CD4-positive, alpha-beta memory T cell (primary cell): ENCODE measurements at regions of chr1 and their contacts with region 1.

Region 1: GRCh38 chr1:174999216-174999925 is 376 bp upstream of the CACYBP start:
- DNase-seq: peak; percentile 97 to 99 (median 99)
- H3K4me3 ChIP-seq: peak overlapping the region; percentile 42 to 63
- H3K4me3 Mint-ChIP-seq: no peak overlapping the region
- H3K27ac ChIP-seq: peak overlapping the region; percentile 99
- H3K27ac Mint-ChIP-seq: no peak overlapping the region
- H3K4me1 ChIP-seq: peaks cover 52% of the 10 kb centered on the region
- H3K4me1 Mint-ChIP-seq: peaks cover 24 to 43% (median 37%) of the 10 kb centered on the region in 4 donors
- H3K27me3 ChIP-seq: no peaks in the 10 kb centered on the region
- H3K27me3 Mint-ChIP-seq: no peaks in the 10 kb centered on the region

Region 2: GRCh38 chr1:173714759-173715537 is 1284.4 kb before region 1 on chr1 and contains the start of gene KLHL20:
- CTCF ChIA-PET with region 1: no interaction called
- POLR2A ChIA-PET with region 1: interaction called, 10 read pairs
- intact Hi-C with region 1: loop called (anchors 10 kb)
- DNase-seq: peak; percentile 89 to 93 (median 91)
- H3K4me3 ChIP-seq: peak within 1 kb of the TSS; percentile 47 to 73
- H3K4me3 Mint-ChIP-seq: peak within 1 kb of the TSS; percentile 95 to 100 (median 97)
- H3K27ac ChIP-seq: peak within 1 kb of the TSS; percentile 78
- H3K27ac Mint-ChIP-seq: peak within 1 kb of the TSS; percentile 92 to 98 (median 97)
- H3K4me1 ChIP-seq: peaks cover 34% of the 10 kb centered on the region
- H3K4me1 Mint-ChIP-seq: peaks cover 18 to 33% (median 25%) of the 10 kb centered on the region in 4 donors
- H3K27me3 ChIP-seq: peaks cover 5% of the 10 kb centered on the region
- H3K27me3 Mint-ChIP-seq: peaks cover 14 to 15% of the 10 kb centered on the region in 2 donors
- total RNA-seq, gene KLHL20: 41.0 to 43.9 TPM

Region 3: DNA sequence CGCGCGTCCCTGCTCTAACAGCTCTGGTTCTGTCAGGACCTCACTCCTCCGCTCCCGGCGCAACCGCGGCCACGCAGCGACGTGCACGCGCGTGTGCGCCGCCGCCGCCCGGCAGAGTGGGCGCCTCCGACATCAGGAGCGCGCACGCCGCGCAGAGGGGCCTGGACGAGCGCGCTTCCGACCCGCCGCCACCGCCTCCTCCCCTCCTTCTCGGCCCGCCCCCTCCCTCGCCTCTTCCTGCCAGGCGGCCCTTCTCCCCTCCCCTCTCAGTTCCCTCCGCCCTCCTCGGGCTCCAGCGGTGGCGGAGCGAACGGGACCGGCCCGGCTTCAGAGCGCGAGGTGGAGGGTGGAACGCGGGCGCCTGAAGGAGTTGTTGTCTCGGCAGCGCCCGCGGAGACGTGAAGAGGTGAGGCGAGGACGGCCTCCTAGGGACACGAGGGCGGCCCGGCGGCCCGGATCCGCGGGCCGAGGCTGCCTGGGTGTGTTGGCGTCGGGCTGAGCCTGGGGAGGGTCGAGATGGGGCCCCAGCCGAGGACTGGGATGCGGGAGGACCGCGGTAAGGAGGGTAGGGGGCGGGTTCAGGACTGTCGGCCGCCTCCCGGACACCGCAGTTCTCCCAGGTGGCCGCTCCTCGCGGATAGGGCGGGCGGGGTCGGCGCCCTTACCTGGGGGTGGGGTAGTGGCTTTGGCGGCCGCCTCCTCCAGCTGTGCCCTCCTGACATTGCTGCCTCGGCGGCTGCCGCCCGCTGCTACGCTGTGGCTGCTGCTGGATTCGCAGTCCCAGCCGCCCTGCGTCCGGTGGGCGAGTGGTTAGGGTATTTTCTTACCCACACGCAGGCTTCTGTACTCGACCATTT is 839.9 kb before region 1 on chr1 and contains the start of gene RABGAP1L:
- CTCF ChIA-PET with region 1: no interaction called
- POLR2A ChIA-PET with region 1: interaction called, 3 read pairs
- intact Hi-C with region 1: loop called (anchors 1 kb)
- DNase-seq: peak; percentile 91 to 96 (median 95)
- H3K4me3 ChIP-seq: peak within 1 kb of the TSS; percentile 88 to 95
- H3K4me3 Mint-ChIP-seq: peak within 1 kb of the TSS; percentile 94 to 99 (median 97)
- H3K27ac ChIP-seq: peak within 1 kb of the TSS; percentile 92
- H3K27ac Mint-ChIP-seq: peak within 1 kb of the TSS; percentile 92 to 99 (median 98)
- H3K4me1 ChIP-seq: peaks cover 56% of the 10 kb centered on the region
- H3K4me1 Mint-ChIP-seq: peaks cover 40 to 67% (median 52%) of the 10 kb centered on the region in 4 donors
- H3K27me3 ChIP-seq: no peaks in the 10 kb centered on the region
- H3K27me3 Mint-ChIP-seq: no peaks in the 10 kb centered on the region
- total RNA-seq, gene RABGAP1L: 113 to 114 TPM

Region 4: GRCh38 chr1:174800216-174800851 is 199.0 kb before region 1 on chr1:
- CTCF ChIA-PET with region 1: interaction called, 12 read pairs
- POLR2A ChIA-PET with region 1: interaction called, 112 read pairs
- intact Hi-C with region 1: loop called (anchors 1 kb)
- DNase-seq: peak in 1 of 5 donors; percentile 47
- H3K4me3 ChIP-seq: peak overlapping the region; percentile 54 to 73
- H3K4me3 Mint-ChIP-seq: no peak overlapping the region
- H3K27ac ChIP-seq: peak overlapping the region; percentile 62
- H3K27ac Mint-ChIP-seq: no peak overlapping the region
- H3K4me1 ChIP-seq: peaks cover 24% of the 10 kb centered on the region
- H3K4me1 Mint-ChIP-seq: peaks cover 0 to 11% (median 9%) of the 10 kb centered on the region in 4 donors
- H3K27me3 ChIP-seq: no peaks in the 10 kb centered on the region
- H3K27me3 Mint-ChIP-seq: no peaks in the 10 kb centered on the region

Region 5: DNA sequence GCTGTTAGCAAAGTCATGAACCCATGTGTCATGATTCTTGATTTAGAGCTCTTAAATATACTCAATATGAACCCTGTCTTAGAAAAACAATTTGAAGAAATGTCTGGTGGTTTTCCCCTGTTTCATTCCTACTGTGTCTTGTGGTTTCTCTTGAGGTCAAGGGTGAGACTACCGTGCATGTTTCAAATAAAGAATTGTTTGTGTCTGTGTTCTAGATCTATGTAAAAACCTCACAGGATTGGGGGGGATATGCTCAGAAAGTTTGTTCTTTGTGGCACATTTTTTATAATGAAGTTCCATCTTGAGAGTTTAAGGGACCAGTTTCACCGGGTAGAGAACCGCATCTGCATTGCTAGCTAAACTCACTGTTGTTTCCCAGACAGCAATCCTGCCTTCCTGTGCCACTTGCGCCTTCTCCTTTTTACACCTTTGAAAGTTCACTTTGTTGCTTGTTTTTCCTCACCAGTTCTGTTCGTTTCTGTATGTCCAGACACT is 30.6 kb before region 1 on chr1:
- CTCF ChIA-PET with region 1: interaction called, 16 read pairs
- POLR2A ChIA-PET with region 1: interaction called, 315 read pairs
- intact Hi-C with region 1: loop called (anchors 1 kb)
- DNase-seq: peak; percentile 77 to 82 (median 78)
- H3K4me3 ChIP-seq: peak overlapping the region in 1 of 2 donors; percentile 29
- H3K4me3 Mint-ChIP-seq: peak overlapping the region; percentile 65 to 84 (median 76)
- H3K27ac ChIP-seq: peak overlapping the region; percentile 59
- H3K27ac Mint-ChIP-seq: peak overlapping the region; percentile 93 to 99 (median 94)
- H3K4me1 ChIP-seq: peaks cover 84% of the 10 kb centered on the region
- H3K4me1 Mint-ChIP-seq: peaks cover 57 to 73% (median 67%) of the 10 kb centered on the region in 4 donors
- H3K27me3 ChIP-seq: no peaks in the 10 kb centered on the region
- H3K27me3 Mint-ChIP-seq: no peaks in the 10 kb centered on the region

Region 6: DNA sequence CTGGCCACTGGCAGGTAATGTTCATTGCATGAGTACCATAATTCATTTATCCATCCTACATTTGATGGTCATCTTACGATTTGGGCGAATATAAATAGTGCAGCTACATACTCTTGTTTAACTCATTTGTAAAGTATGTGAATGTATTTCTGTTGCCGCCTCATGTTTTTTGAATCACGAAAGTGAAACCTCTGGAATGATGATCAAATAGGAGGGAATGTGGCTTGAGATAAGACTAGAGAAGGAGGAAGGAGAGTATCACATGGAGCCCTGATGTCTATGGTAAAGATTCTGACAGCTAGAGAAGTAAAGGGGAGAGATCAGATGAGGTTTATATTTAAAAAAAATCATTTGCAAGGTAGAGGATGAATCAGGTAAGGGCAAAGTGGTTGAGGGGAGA is 15.9 kb after region 1 on chr1:
- CTCF ChIA-PET with region 1: interaction called, 5 read pairs
- POLR2A ChIA-PET with region 1: interaction called, 26 read pairs
- intact Hi-C with region 1: no loop called
- DNase-seq: no peak
- H3K4me3 ChIP-seq: no peak overlapping the region
- H3K4me3 Mint-ChIP-seq: no peak overlapping the region
- H3K27ac ChIP-seq: no peak overlapping the region
- H3K27ac Mint-ChIP-seq: peak overlapping the region in 2 of 7 donors; percentile 0 to 52
- H3K4me1 ChIP-seq: no peaks in the 10 kb centered on the region
- H3K4me1 Mint-ChIP-seq: peaks cover 8 to 13% (median 10%) of the 10 kb centered on the region in 4 donors
- H3K27me3 ChIP-seq: no peaks in the 10 kb centered on the region
- H3K27me3 Mint-ChIP-seq: no peaks in the 10 kb centered on the region